Mammary epithelial cell (primary cell): ENCODE measurements at regions of chr1 and their contacts with region 1.

Region 1: GRCh38 chr1:87292684-87293493 is 35.8 kb upstream of the LMO4 start:
- DNase-seq: peak; percentile 21
- H3K4me3 ChIP-seq: no peak overlapping the region
- H3K27ac ChIP-seq: no peak overlapping the region
- H3K4me1 ChIP-seq: no peaks in the 10 kb centered on the region
- H3K27me3 ChIP-seq: peaks cover 2% of the 10 kb centered on the region
- CTCF ChIP-seq: peak; percentile 69 to 73

Region 2: GRCh38 chr1:87131809-87132283 is 161.0 kb before region 1 on chr1:
- CTCF ChIA-PET with region 1: no interaction called
- dilution Hi-C with region 1: no loop called
- in situ Hi-C with region 1: loop called in 1 of 2 experiments (anchors 25 kb)
- intact Hi-C with region 1: loop called (anchors 1 kb)
- DNase-seq: peak; percentile 54
- H3K4me3 ChIP-seq: peak overlapping the region; percentile 4 to 63 (median 40)
- H3K27ac ChIP-seq: no peak overlapping the region
- H3K4me1 ChIP-seq: peaks cover 23% of the 10 kb centered on the region
- H3K27me3 ChIP-seq: no peaks in the 10 kb centered on the region
- CTCF ChIP-seq: peak; percentile 82 to 97

Region 3: DNA sequence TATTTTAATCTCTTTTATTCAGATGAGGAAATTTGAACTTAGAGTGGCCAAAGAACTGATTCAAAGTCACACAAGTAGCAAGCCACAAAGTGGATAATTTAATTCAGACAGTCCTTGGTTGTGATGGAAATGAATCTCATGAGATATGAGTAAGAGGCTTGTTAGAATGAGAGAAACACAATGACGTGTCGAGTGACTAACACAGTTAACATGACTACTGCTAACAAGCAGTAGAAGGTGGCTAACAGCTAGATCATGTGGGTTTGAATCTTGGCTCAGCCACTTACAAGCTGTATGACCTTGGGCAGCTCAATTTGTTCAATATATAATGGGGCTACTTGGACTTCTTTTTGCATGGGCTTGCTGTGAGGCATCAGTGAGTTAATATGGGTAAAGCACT is 68.7 kb before region 1 on chr1:
- CTCF ChIA-PET with region 1: no interaction called
- dilution Hi-C with region 1: no loop called
- in situ Hi-C with region 1: no loop called
- intact Hi-C with region 1: no loop called
- DNase-seq: peak; percentile 98
- H3K4me3 ChIP-seq: no peak overlapping the region
- H3K27ac ChIP-seq: peak overlapping the region; percentile 75
- H3K4me1 ChIP-seq: peaks cover 49% of the 10 kb centered on the region
- H3K27me3 ChIP-seq: no peaks in the 10 kb centered on the region
- CTCF ChIP-seq: no peak

Region 4: DNA sequence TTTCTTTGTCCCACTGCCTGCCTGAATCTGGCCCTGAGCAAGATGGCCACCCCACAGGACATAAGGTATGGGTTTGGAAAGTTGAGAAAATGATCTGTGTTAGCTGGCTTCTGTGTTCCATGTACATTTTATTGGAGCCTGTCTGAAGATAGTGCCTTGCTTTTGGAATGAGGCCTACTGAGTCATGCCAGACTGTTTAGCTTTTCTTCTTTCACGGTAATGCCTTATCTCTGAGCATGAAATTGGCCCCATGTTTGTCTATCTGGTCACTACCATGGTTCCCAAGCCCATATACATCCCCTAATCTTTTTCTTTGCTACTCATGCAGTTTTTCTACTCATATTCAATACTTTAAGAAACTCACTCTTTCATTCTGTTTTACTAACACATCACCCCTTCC is 49.3 kb before region 1 on chr1:
- CTCF ChIA-PET with region 1: no interaction called
- dilution Hi-C with region 1: no loop called
- in situ Hi-C with region 1: no loop called
- intact Hi-C with region 1: no loop called
- DNase-seq: no peak
- H3K4me3 ChIP-seq: no peak overlapping the region
- H3K27ac ChIP-seq: no peak overlapping the region
- H3K4me1 ChIP-seq: no peaks in the 10 kb centered on the region
- H3K27me3 ChIP-seq: no peaks in the 10 kb centered on the region
- CTCF ChIP-seq: no peak

Region 5: DNA sequence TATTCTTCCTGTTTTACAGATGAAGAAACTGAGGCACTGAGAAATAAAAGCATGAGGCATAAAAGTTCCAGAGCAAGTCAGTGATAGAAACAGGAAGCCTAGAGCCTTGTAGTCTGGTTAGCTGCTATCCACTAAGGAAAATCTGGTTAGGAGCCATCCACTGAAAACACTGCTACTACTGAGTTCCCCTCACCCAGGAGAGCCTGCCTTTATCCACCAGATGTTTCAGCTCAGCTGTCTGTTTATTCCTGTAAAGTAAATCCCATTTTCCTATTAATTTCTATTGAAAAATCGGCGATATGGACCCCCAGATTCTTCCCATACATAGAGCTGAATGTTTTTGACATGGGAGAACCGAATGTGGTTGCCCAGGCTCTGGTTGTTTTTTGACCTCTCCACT is 27.9 kb before region 1 on chr1:
- CTCF ChIA-PET with region 1: no interaction called
- dilution Hi-C with region 1: no loop called
- in situ Hi-C with region 1: no loop called
- intact Hi-C with region 1: no loop called
- DNase-seq: no peak
- H3K4me3 ChIP-seq: no peak overlapping the region
- H3K27ac ChIP-seq: no peak overlapping the region
- H3K4me1 ChIP-seq: no peaks in the 10 kb centered on the region
- H3K27me3 ChIP-seq: no peaks in the 10 kb centered on the region
- CTCF ChIP-seq: no peak

Region 6: GRCh38 chr1:87335175-87335884 is 42.4 kb after region 1 on chr1:
- CTCF ChIA-PET with region 1: no interaction called
- dilution Hi-C with region 1: no loop called
- in situ Hi-C with region 1: no loop called
- intact Hi-C with region 1: no loop called
- DNase-seq: peak; percentile 42
- H3K4me3 ChIP-seq: peak overlapping the region; percentile 40 to 72 (median 47)
- H3K27ac ChIP-seq: peak overlapping the region; percentile 29
- H3K4me1 ChIP-seq: peaks cover 27% of the 10 kb centered on the region
- H3K27me3 ChIP-seq: no peaks in the 10 kb centered on the region
- CTCF ChIP-seq: peak in 1 of 2 donors; percentile 3

Region 7: GRCh38 chr1:88302843-88303486 is 1010.1 kb after region 1 on chr1:
- CTCF ChIA-PET with region 1: no interaction called
- dilution Hi-C with region 1: no loop called
- in situ Hi-C with region 1: loop called in 1 of 2 experiments (anchors 25 kb)
- intact Hi-C with region 1: loop called (anchors 2 kb)
- DNase-seq: no peak
- H3K4me3 ChIP-seq: no peak overlapping the region
- H3K27ac ChIP-seq: no peak overlapping the region
- H3K4me1 ChIP-seq: no peaks in the 10 kb centered on the region
- H3K27me3 ChIP-seq: no peaks in the 10 kb centered on the region
- CTCF ChIP-seq: peak in 1 of 2 donors; percentile 54

Region 8: DNA sequence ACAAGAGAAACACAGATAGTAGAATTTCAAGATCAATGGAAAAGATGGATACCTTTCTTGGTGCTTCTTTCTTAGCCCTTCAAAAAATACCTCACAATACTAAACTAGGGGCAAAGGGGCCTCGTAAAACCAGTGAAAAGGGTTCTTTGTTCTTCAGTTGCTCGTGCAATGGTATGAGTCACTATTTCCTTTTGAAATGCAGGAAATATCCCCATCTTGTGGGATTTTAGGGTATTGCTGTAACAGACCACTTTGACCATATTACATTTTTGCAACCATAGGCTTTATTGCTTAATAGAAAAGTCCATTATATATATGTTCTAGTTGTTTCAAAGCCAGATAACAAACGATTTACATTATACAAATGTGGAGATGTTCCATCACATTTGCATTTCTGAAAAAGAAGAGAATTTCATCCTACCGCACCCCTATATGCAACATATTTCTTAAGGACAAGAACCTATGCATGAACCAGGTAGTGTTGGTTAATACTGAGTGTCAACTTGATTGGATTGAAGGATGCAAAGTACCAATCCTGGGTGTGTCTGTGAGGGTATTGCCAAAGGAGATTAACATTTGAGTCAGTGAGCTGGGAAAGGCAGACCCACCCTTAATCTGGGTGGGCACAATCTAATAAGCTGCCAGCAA is 1302.6 kb after region 1 on chr1:
- CTCF ChIA-PET with region 1: no interaction called
- dilution Hi-C with region 1: no loop called
- in situ Hi-C with region 1: no loop called
- intact Hi-C with region 1: loop called (anchors 10 kb)
- DNase-seq: peak; percentile 62
- H3K4me3 ChIP-seq: no peak overlapping the region
- H3K27ac ChIP-seq: no peak overlapping the region
- H3K4me1 ChIP-seq: no peaks in the 10 kb centered on the region
- H3K27me3 ChIP-seq: no peaks in the 10 kb centered on the region
- CTCF ChIP-seq: peak; percentile 51 to 69